Activated naive CD4-positive, alpha-beta T cell treated with anti-CD3 and anti-CD28 coated beads for 36 hours (primary cell): ENCODE measurements at regions of chr12 and their contacts with region 1.

Region 1: DNA sequence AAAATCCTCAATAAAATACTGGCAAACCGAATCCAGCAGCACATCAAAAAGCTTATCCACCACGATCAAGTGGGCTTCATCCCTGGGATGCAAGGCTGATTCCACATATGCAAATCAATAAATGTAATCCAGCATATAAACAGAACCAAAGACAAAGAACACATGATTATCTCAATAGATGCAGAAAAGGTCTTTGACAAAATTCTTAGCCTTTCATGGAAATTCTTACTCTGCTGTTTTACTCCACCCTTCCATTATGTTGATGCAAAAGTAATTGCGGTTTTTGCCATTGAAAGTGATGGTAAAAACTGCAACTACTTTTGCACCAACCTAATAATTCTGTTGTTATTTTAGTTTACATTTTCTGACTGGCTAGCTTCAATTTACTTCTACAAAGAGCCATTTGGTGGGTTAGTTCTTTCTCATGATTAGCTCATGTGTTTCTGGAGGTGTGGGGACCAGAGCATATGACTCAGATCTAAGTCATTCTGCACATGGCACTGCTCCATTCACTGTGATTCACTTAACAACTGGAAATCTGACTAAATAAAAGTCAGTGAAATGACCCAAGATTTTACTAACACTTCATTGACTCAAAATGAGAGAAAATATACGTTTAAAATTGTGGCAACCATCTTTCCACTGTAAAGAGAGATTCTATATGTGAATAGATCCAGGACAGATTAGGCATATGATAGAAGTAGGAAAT is 99.9 kb downstream of the TMTC3 start:
- DNase-seq: peak; percentile 65
- H3K4me3 Mint-ChIP-seq: no peak overlapping the region
- H3K27ac Mint-ChIP-seq: peak overlapping the region; percentile 68
- H3K4me1 Mint-ChIP-seq: peaks cover 36% of the 10 kb centered on the region
- H3K27me3 Mint-ChIP-seq: peaks cover 14% of the 10 kb centered on the region

Region 2: DNA sequence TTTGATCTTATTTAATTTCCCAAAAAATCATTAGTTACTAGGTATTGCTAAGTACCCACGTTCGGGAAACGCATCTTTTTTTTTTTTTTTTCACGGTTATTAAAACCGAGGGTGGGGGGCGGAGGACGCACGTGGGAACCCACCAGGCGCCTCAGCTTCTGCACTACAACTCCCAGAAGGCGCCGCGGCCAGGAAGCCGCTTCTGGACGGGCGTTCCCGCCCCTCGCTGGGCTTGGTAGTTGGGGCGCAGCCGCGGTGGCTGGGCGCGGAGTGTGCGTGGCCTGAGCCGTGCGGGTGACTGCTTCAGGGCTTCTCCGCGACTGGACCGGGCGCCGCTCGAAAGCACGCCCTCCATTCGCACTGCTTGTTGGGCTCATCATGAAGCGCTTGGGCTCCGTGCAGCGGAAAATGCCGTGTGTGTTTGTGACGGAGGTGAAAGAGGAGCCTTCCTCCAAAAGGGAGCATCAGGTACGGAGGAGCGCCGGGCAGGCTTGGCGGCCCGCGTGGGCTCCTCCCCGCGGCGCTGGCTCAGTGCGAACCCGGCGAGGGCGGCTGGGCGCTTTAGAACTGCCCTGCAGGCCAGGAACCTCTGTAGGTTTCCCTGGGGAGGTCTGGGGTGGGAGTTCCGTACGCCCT is 206.6 kb before region 1 on chr12:
- CTCF ChIA-PET with region 1: no interaction called
- intact Hi-C with region 1: loop called (anchors 2 kb)
- DNase-seq: peak; percentile 89
- H3K4me3 Mint-ChIP-seq: peak overlapping the region; percentile 93
- H3K27ac Mint-ChIP-seq: peak overlapping the region; percentile 90
- H3K4me1 Mint-ChIP-seq: peaks cover 52% of the 10 kb centered on the region
- H3K27me3 Mint-ChIP-seq: no peaks in the 10 kb centered on the region

Region 3: DNA sequence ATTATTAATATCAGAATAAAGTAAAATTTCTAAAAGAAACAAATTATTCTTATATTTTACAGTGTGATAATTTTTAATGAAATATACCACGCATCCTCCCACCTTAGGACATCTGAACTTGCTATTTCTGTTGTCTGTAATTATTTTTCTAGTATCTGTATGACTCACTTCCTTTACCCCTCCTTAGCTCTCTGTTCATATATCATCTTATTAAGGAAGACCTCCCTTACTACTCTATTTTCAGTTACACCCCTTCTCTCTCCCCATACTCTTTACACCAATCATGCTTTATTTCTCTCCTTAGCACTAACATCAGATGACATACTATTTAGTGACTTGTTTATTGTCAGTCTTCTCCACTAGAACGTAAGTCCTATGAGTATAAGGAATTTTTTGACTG is 178.6 kb before region 1 on chr12:
- CTCF ChIA-PET with region 1: no interaction called
- intact Hi-C with region 1: no loop called
- DNase-seq: no peak
- H3K4me3 Mint-ChIP-seq: no peak overlapping the region
- H3K27ac Mint-ChIP-seq: no peak overlapping the region
- H3K4me1 Mint-ChIP-seq: peaks cover 3% of the 10 kb centered on the region
- H3K27me3 Mint-ChIP-seq: no peaks in the 10 kb centered on the region

Region 4: DNA sequence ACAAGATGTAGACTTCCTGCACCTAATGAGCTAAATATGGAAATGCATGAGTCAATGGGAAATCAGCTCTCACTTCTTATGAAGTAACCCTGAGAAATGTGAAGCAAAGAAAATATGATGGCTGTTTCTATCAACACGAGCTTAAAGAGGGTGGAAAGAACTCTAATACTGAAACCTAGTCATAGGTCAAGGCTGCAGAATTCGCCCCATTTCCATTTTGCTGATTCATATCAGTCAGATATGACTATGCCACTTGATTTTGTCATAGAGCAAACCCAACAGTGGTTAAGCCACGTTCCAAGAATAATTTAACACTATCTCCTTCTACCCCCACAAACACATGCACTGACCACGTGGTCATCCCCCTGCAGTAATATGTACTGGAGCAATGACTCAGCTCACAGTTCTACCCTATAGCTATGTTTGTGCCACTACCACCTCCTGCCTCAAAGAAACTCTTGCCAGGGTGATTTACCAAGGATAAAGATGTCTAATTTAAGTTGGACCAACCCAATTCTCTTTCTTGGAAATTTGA is 57.6 kb after region 1 on chr12:
- CTCF ChIA-PET with region 1: no interaction called
- intact Hi-C with region 1: loop called (anchors 1 kb)
- DNase-seq: peak; percentile 50
- H3K4me3 Mint-ChIP-seq: no peak overlapping the region
- H3K27ac Mint-ChIP-seq: peak overlapping the region; percentile 9
- H3K4me1 Mint-ChIP-seq: peaks cover 17% of the 10 kb centered on the region
- H3K27me3 Mint-ChIP-seq: peaks cover 5% of the 10 kb centered on the region